ENCODE measurements at regions of chr4 and their contacts with region 1.

Region 1: DNA sequence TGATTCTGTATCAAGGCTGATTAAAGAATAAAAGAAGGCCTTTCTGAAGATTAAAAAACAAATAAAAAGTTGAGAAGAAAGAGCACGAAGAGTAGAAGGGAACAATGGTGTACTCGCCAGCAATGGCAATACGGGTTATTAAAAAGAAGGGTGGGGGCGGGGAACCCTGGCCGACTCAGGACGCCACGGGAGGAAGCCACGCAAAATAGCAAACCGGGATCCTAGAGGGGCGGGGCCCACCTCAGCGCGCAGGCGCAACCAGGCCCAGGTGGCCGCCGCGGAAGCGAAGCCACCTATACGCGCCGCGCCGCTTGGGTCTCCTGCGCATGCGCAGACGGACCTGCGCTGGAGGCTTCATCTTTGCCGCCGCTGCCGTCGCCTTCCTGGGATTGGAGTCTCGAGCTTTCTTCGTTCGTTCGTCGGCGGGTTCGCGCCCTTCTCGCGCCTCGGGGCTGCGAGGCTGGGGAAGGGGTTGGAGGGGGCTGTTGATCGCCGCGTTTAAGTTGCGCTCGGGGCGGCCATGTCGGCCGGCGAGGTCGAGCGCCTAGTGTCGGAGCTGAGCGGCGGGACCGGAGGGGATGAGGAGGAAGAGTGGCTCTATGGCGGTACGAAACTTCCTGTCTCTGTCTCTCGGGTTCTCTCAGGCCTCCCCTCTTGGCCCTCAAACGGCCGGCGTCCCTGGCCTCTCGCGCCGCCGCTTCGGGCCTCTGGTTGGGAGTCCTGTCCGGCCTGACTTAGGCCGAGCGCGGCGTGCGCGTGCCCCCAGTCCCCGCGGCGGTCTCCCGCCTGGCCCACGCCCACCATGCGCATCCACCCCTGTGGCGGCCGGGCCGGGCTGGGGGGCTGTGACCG is at the start of gene FIP1L1:
- DNase-seq: peak; percentile 90 to 99 (median 96)
- ATAC-seq: peak; percentile 95
- H3K4me3 ChIP-seq: peak within 1 kb of the TSS; percentile 92
- H3K4me3 Mint-ChIP-seq: peak within 1 kb of the TSS; percentile 99
- H3K27ac ChIP-seq: peak within 1 kb of the TSS; percentile 89 to 95
- H3K27ac Mint-ChIP-seq: peak within 1 kb of the TSS; percentile 97
- H3K4me1 ChIP-seq: peaks cover 6% of the 10 kb centered on the region
- H3K4me1 Mint-ChIP-seq: peaks cover 53% of the 10 kb centered on the region
- H3K27me3 ChIP-seq: no peaks in the 10 kb centered on the region
- H3K27me3 Mint-ChIP-seq: peaks cover 5% of the 10 kb centered on the region
- CTCF ChIP-seq: no peak
- total RNA-seq, gene FIP1L1: 50.9 to 53.1 TPM

Region 2: DNA sequence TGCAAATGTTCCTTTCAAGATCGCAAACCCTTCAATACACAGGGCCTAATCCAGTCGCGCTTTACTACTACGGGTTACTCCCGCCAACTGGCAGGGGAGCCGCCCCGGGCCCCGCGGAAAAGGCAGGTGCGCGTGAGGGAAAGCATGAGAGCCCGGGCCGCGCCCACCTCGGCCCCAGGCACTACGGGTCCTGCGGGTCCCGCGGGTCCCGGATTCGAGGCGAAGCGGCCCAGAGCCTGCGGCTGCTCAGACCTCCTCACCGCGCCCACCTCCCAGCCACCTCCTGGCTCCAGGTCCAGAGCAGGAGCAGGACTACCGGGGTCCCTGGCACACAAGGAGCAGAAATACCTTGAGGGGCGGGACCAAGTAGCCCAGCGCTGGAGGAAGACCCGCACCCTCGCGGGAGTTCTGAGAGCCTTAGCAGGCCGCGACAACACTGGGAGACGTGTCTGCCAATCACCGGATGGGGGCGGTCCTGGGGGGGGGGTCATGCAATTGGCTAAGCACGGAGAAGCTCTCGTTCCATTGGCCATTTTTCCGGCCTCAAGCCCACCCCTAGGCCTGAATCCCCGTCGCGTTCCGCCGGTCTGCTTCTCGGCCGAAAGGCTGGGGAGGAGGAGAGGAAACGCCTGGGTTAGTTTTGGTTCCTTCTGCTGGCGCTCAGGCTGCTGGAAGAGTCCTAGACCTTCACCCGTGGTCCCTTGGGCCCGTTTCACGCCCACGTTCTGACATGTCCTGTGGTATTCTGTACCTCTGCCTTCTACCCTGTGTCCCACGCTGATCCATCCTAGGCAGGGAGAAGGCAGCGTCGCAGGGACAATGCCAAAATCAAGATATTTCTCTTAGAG is 655.4 kb before region 1 on chr4:
- CTCF ChIA-PET with region 1: no interaction called
- POLR2A ChIA-PET with region 1: interaction called, 8 read pairs
- intact Hi-C with region 1: loop called in 1 of 2 experiments (anchors 5 kb)
- DNase-seq: peak; percentile 76 to 97 (median 84)
- ATAC-seq: peak; percentile 98
- H3K4me3 ChIP-seq: peak overlapping the region; percentile 76
- H3K4me3 Mint-ChIP-seq: peak overlapping the region; percentile 78
- H3K27ac ChIP-seq: peak overlapping the region; percentile 69 to 84
- H3K27ac Mint-ChIP-seq: peak overlapping the region; percentile 89
- H3K4me1 ChIP-seq: peaks cover 18% of the 10 kb centered on the region
- H3K4me1 Mint-ChIP-seq: peaks cover 15% of the 10 kb centered on the region
- H3K27me3 ChIP-seq: no peaks in the 10 kb centered on the region
- H3K27me3 Mint-ChIP-seq: no peaks in the 10 kb centered on the region
- CTCF ChIP-seq: no peak

Region 3: GRCh38 chr4:53321151-53321983 is 56.2 kb before region 1 on chr4:
- CTCF ChIA-PET with region 1: no interaction called
- POLR2A ChIA-PET with region 1: no interaction called
- intact Hi-C with region 1: no loop called
- DNase-seq: no peak
- ATAC-seq: no peak
- H3K4me3 ChIP-seq: no peak overlapping the region
- H3K4me3 Mint-ChIP-seq: no peak overlapping the region
- H3K27ac ChIP-seq: no peak overlapping the region
- H3K27ac Mint-ChIP-seq: no peak overlapping the region
- H3K4me1 ChIP-seq: no peaks in the 10 kb centered on the region
- H3K4me1 Mint-ChIP-seq: peaks cover 33% of the 10 kb centered on the region
- H3K27me3 ChIP-seq: no peaks in the 10 kb centered on the region
- H3K27me3 Mint-ChIP-seq: no peaks in the 10 kb centered on the region
- CTCF ChIP-seq: no peak

Region 4: GRCh38 chr4:53365486-53366300 is 11.9 kb before region 1 on chr4 and contains the start of gene SCFD2:
- CTCF ChIA-PET with region 1: no interaction called
- POLR2A ChIA-PET with region 1: interaction called, 35 read pairs
- intact Hi-C with region 1: loop called (anchors 1 kb)
- DNase-seq: peak; percentile 87 to 98 (median 95)
- ATAC-seq: peak; percentile 95
- H3K4me3 ChIP-seq: peak within 1 kb of the TSS; percentile 72
- H3K4me3 Mint-ChIP-seq: peak within 1 kb of the TSS; percentile 91
- H3K27ac ChIP-seq: peak within 1 kb of the TSS; percentile 75 to 77
- H3K27ac Mint-ChIP-seq: peak within 1 kb of the TSS; percentile 93
- H3K4me1 ChIP-seq: peaks cover 30% of the 10 kb centered on the region
- H3K4me1 Mint-ChIP-seq: peaks cover 55% of the 10 kb centered on the region
- H3K27me3 ChIP-seq: peaks cover 0 to 6% of the 10 kb centered on the region in 2 experiments
- H3K27me3 Mint-ChIP-seq: peaks cover 11% of the 10 kb centered on the region
- CTCF ChIP-seq: no peak
- total RNA-seq, gene SCFD2: 15.4 to 17.6 TPM

Region 5: DNA sequence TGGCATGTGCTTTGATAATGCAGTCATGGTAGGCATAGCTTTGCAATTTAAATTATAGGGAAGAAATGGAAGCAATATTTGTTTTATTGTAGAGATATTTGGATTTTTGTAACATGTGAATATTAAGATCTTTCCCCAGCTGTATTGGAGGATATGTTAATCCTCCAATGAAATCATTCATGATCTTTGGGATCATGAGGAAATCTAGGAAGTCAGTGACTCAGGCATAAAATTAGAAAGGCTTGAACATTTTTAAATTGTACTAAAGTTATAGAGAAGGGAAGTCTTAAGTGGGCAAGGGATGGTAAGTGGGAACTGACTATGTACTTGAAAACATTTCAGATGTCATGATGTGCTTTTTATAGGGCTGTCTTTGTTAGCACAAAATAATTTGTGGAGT is 46.7 kb after region 1 on chr4:
- CTCF ChIA-PET with region 1: no interaction called
- POLR2A ChIA-PET with region 1: no interaction called
- intact Hi-C with region 1: loop called in 1 of 2 experiments (anchors 10 kb)
- DNase-seq: no peak
- ATAC-seq: no peak
- H3K4me3 ChIP-seq: no peak overlapping the region
- H3K4me3 Mint-ChIP-seq: no peak overlapping the region
- H3K27ac ChIP-seq: no peak overlapping the region
- H3K27ac Mint-ChIP-seq: peak overlapping the region; percentile 12
- H3K4me1 ChIP-seq: no peaks in the 10 kb centered on the region
- H3K4me1 Mint-ChIP-seq: peaks cover 23% of the 10 kb centered on the region
- H3K27me3 ChIP-seq: no peaks in the 10 kb centered on the region
- H3K27me3 Mint-ChIP-seq: no peaks in the 10 kb centered on the region
- CTCF ChIP-seq: no peak

Measured in CD4-positive, alpha-beta T cell (primary cell).